Endothelial cell of umbilical vein (primary cell): ENCODE measurements at regions of chr1 and their contacts with region 1.

Region 1: GRCh38 chr1:55690366-55690765 is 475.2 kb upstream of the USP24 start:
- DNase-seq: no peak
- H3K4me3 ChIP-seq: no peak overlapping the region
- H3K27ac ChIP-seq: no peak overlapping the region
- H3K4me1 ChIP-seq: no peaks in the 10 kb centered on the region
- H3K27me3 ChIP-seq: no peaks in the 10 kb centered on the region
- CTCF ChIP-seq: no peak
- POLR2A ChIP-seq: no peak

Region 2: GRCh38 chr1:55519937-55520683 is 170.3 kb before region 1 on chr1:
- CTCF ChIA-PET with region 1: no interaction called
- POLR2A ChIA-PET with region 1: no interaction called
- dilution Hi-C with region 1: no loop called
- intact Hi-C with region 1: no loop called
- DNase-seq: no peak
- H3K4me3 ChIP-seq: no peak overlapping the region
- H3K27ac ChIP-seq: no peak overlapping the region
- H3K4me1 ChIP-seq: no peaks in the 10 kb centered on the region
- H3K27me3 ChIP-seq: no peaks in the 10 kb centered on the region
- CTCF ChIP-seq: no peak
- POLR2A ChIP-seq: no peak

Region 3: DNA sequence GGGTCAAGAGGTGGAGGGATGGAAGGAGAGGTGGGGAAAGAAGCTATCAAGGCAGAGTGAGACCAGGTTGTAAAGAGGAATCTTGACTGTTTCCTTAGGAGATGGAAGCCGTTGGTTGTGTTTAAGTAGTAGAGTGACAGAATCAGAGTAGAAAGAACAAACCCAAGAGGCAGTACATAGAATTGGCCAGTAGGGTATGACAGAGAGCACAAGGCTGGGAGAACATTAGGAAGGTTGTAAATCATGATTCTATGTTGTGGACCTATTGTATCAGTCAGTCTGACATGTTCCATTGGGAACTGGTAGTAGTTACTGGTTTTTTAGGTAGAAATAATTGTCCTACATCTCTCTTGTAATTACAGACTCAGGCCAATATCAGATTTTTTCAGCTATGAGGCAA is 11.7 kb after region 1 on chr1:
- CTCF ChIA-PET with region 1: interaction called, 11 read pairs
- POLR2A ChIA-PET with region 1: no interaction called
- dilution Hi-C with region 1: no loop called
- intact Hi-C with region 1: no loop called
- DNase-seq: peak; percentile 63
- H3K4me3 ChIP-seq: no peak overlapping the region
- H3K27ac ChIP-seq: no peak overlapping the region
- H3K4me1 ChIP-seq: no peaks in the 10 kb centered on the region
- H3K27me3 ChIP-seq: no peaks in the 10 kb centered on the region
- CTCF ChIP-seq: peak; percentile 55 to 71
- POLR2A ChIP-seq: no peak